ENCODE measurements at regions of chr12 and their contacts with region 1.

Region 1: GRCh38 chr12:7060353-7060954 is at the start of gene C1S:
- DNase-seq: peak; percentile 96
- H3K4me3 ChIP-seq: peak within 1 kb of the TSS; percentile 53
- CTCF ChIP-seq: peak; percentile 76

Region 2: GRCh38 chr12:7042842-7043241 is 17.6 kb before region 1 on chr12:
- CTCF ChIA-PET with region 1: interaction called, 15 read pairs
- POLR2A ChIA-PET with region 1: no interaction called
- DNase-seq: no peak
- H3K4me3 ChIP-seq: no peak overlapping the region
- CTCF ChIP-seq: no peak

Region 3: GRCh38 chr12:7073946-7074345 is 13.5 kb after region 1 on chr12:
- CTCF ChIA-PET with region 1: interaction called, 21 read pairs
- POLR2A ChIA-PET with region 1: interaction called, 7 read pairs
- DNase-seq: no peak
- H3K4me3 ChIP-seq: no peak overlapping the region
- CTCF ChIP-seq: no peak

Region 4: GRCh38 chr12:7188562-7189397 is 128.3 kb after region 1 on chr12:
- CTCF ChIA-PET with region 1: interaction called, 10 read pairs
- POLR2A ChIA-PET with region 1: no interaction called
- DNase-seq: no peak
- H3K4me3 ChIP-seq: peak overlapping the region; percentile 93
- CTCF ChIP-seq: peak; percentile 94

Region 5: GRCh38 chr12:7339675-7340074 is 279.2 kb after region 1 on chr12:
- CTCF ChIA-PET with region 1: no interaction called
- POLR2A ChIA-PET with region 1: no interaction called
- DNase-seq: no peak
- H3K4me3 ChIP-seq: no peak overlapping the region
- CTCF ChIP-seq: no peak